ENCODE measurements at regions of chr2 and their contacts with region 1.

Region 1: GRCh38 chr2:96477458-96477857 is 27.7 kb downstream of the NEURL3 start:
- DNase-seq: no peak
- ATAC-seq: no peak
- H3K4me3 ChIP-seq: no peak overlapping the region
- H3K27ac ChIP-seq: no peak overlapping the region
- H3K4me1 ChIP-seq: no peaks in the 10 kb centered on the region
- H3K27me3 ChIP-seq: peaks cover 9% of the 10 kb centered on the region
- CTCF ChIP-seq: no peak
- POLR2A ChIP-seq: no peak
- RAD21 ChIP-seq: no peak

Region 2: GRCh38 chr2:96427917-96428316 is 49.5 kb before region 1 on chr2:
- CTCF ChIA-PET with region 1: no interaction called
- POLR2A ChIA-PET with region 1: no interaction called
- dilution Hi-C with region 1: no loop called
- in situ Hi-C with region 1: no loop called
- intact Hi-C with region 1: loop called (anchors 5 kb)
- DNase-seq: peak; percentile 70
- ATAC-seq: no peak
- H3K4me3 ChIP-seq: no peak overlapping the region
- H3K27ac ChIP-seq: no peak overlapping the region
- H3K4me1 ChIP-seq: no peaks in the 10 kb centered on the region
- H3K27me3 ChIP-seq: peaks cover 8% of the 10 kb centered on the region
- CTCF ChIP-seq: no peak
- POLR2A ChIP-seq: no peak
- RAD21 ChIP-seq: no peak

Measured in IMR-90 (cell line).